Ascending aorta (tissue), 2 donors: ENCODE measurements at regions of chr10 and their contacts with region 1.

Region 1: DNA sequence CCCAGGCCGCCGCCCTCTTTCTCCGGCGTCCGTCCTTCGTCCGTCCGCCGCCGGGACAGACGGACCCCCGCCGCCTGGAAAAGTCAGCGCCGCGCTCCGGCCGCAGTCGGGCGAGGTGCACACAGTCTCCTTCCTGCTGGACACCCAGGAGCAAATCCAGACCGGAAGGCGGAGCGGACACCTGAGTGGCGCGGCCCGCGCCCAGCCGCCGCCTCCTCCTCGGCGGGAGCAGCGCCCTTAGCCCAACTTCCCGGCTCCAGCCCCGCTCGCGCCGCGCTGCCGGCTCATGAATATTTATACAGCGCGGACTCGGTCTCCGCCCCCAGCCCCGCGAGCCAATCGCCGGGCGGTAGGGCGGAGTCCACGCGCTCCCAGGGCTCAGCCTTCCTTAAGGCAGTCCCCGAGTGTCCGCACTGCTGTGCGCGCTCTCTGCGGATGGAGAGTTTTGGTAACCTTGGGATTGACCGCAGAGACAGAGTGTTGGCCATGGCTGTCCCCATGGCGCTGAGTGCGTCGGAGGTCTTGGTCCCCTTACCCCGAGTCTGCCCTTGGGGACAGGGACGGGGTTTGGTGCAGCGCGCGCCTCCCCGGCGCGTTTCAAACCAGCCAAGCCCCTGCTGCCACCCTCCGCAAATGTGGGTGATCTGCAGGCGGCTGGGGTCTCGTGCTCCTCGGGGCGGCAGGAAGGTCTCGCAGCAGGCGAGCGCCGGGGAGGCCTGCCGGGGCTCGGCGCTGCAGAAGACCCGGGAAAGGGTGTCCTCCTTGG is at the start of gene FZD8:
- DNase-seq: peak; percentile 63 to 95
- H3K4me3 ChIP-seq: peak within 1 kb of the TSS; percentile 76 to 83
- H3K27ac ChIP-seq: peak within 1 kb of the TSS; percentile 88 to 91
- H3K4me1 ChIP-seq: peaks cover 0 to 6% of the 10 kb centered on the region in 2 donors
- H3K27me3 ChIP-seq: no peaks in the 10 kb centered on the region
- CTCF ChIP-seq: peak in 1 of 3 experiments; percentile 27
- total RNA-seq, gene FZD8: 23.0 TPM

Region 2: GRCh38 chr10:35126530-35127296 is 515.5 kb before region 1 on chr10 and contains the start of gene CREM:
- intact Hi-C with region 1: loop called (anchors 2 kb)
- DNase-seq: peak; percentile 90 to 99
- H3K4me3 ChIP-seq: peak within 1 kb of the TSS; percentile 68 to 93
- H3K27ac ChIP-seq: peak within 1 kb of the TSS; percentile 99 to 100
- H3K4me1 ChIP-seq: peaks cover 0 to 6% of the 10 kb centered on the region in 2 donors
- H3K27me3 ChIP-seq: no peaks in the 10 kb centered on the region
- CTCF ChIP-seq: peak; percentile 92 to 93 (median 92)
- total RNA-seq, gene CREM: 14.9 TPM

Region 3: DNA sequence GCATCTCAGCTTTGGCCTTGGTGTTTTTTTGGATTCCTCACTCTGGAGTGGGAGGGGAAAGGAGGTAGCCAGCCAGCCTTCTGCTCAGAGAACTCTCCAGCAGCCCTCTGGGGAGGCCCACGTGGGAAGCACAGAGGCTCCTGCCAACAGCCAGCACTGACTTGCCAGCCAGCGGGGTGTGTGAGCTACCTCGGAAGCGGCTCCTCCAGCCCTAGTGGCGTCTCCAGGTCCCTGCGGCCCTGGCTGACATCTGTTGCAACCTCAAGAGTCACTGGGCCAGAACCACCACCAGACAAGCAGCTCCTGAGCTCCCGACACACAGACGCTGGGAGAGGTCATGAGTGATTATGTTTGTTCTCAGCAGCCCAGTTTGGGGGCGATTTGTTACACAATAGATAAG is 180.1 kb after region 1 on chr10:
- intact Hi-C with region 1: loop called (anchors 2 kb)
- DNase-seq: peak; percentile 57 to 96
- H3K4me3 ChIP-seq: no peak overlapping the region
- H3K27ac ChIP-seq: peak overlapping the region; percentile 73 to 78
- H3K4me1 ChIP-seq: peaks cover 9 to 24% of the 10 kb centered on the region in 2 donors
- H3K27me3 ChIP-seq: no peaks in the 10 kb centered on the region
- CTCF ChIP-seq: peak; percentile 42 to 59 (median 53)

Region 4: DNA sequence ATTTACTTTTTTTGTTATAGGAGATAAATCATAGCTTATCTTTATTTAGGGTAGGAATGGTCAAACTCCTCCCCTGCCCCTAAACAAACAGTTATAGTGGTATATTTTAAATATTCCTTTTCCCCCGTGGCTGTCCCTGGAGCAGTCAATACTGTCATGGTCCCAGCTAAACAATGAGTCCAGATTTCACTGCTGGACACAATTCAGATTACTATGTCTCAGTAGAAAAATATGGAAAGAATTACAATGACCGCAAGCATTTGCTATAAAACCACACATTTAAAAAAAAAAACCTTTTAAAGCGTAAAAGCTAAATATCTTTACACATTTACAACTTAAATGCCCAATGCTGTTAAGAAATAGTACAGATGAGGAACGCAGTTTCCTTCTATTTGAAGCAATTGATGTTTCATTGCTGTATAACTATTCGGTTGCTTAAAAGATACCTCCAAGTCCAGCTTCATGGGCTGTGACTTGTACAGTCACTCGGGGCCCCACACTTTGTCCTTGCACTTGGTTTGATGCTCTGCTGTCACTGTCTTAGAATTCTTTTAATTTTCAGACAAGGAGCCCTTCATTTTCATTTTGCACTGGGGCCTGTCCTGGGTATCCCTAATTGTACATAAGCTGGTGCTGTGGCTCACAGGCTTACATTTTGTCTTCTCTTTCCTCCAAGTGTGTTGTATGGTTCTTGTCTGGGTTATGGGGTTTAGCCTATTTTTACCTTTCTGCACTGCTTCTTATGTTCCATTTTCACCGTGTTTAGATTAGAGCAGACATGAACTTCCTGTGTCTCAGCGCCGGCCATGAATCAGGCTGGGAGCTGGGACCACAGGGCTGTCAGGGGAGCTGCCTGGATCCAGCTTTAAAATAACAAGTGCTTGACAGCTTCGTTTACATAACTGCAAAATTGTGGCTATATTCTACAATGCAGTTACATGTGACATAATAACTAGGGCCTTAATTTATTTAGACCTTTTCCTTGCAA is 530.0 kb after region 1 on chr10:
- intact Hi-C with region 1: loop called (anchors 5 kb)
- DNase-seq: no peak
- H3K4me3 ChIP-seq: peak overlapping the region; percentile 5 to 10
- H3K27ac ChIP-seq: peak overlapping the region; percentile 63 to 71
- H3K4me1 ChIP-seq: peaks cover 0 to 17% of the 10 kb centered on the region in 2 donors
- H3K27me3 ChIP-seq: no peaks in the 10 kb centered on the region
- CTCF ChIP-seq: no peak

Region 5: DNA sequence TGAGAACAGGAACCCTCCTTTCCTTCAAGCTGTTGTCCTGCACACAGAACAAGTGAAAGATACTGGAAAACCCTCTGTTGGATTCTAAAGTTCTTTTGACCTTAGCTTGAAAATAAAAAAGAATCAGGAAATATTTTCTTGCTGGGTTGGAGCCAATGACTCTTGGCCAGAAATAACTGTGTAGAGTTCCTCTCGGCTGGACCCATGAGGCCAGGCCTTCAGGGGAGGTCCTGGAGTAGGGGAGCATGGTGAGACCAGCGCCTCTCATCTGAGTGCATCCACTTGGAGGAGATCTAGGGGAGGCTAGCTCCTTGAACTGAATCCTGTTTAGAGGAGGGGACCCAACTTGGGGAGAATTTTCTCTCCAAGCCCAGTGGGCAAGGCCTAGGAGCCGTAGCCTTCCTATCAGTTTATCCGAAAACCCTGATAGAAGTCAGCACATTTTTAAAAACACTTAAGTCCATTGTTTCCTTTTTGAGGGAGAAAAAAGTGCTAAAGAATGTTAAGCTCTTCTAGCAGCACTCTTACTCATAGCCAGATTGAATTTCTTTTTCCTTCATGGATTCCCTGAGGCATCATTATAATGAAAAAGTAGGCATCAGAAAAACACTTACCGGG is 847.5 kb after region 1 on chr10:
- intact Hi-C with region 1: loop called (anchors 5 kb)
- DNase-seq: no peak
- H3K4me3 ChIP-seq: peak overlapping the region in 1 of 2 donors; percentile 26
- H3K27ac ChIP-seq: peak overlapping the region; percentile 87 to 88
- H3K4me1 ChIP-seq: peaks cover 11 to 41% of the 10 kb centered on the region in 2 donors
- H3K27me3 ChIP-seq: no peaks in the 10 kb centered on the region
- CTCF ChIP-seq: no peak